Natural killer cell (primary cell): ENCODE measurements at regions of chr11 and their contacts with region 1.

Region 1: GRCh38 chr11:5808500-5809121 is at the start of gene OR52N2:
- DNase-seq: peak; percentile 63 to 87
- ATAC-seq: peak; percentile 87 to 95 (median 87)
- H3K4me3 ChIP-seq: peak within 1 kb of the TSS; percentile 48
- H3K4me3 Mint-ChIP-seq: peak within 1 kb of the TSS; percentile 83
- H3K27ac ChIP-seq: no peak within 1 kb of the TSS
- H3K27ac Mint-ChIP-seq: peak within 1 kb of the TSS in 1 of 2 donors; percentile 19
- H3K4me1 ChIP-seq: peaks cover 9% of the 10 kb centered on the region
- H3K4me1 Mint-ChIP-seq: peaks cover 12% of the 10 kb centered on the region in 2 donors
- H3K27me3 ChIP-seq: peaks cover 6% of the 10 kb centered on the region
- H3K27me3 Mint-ChIP-seq: peaks cover 26 to 34% of the 10 kb centered on the region in 2 donors
- CTCF ChIP-seq: peak; percentile 85
- total RNA-seq, gene OR52N2: not detected

Region 2: DNA sequence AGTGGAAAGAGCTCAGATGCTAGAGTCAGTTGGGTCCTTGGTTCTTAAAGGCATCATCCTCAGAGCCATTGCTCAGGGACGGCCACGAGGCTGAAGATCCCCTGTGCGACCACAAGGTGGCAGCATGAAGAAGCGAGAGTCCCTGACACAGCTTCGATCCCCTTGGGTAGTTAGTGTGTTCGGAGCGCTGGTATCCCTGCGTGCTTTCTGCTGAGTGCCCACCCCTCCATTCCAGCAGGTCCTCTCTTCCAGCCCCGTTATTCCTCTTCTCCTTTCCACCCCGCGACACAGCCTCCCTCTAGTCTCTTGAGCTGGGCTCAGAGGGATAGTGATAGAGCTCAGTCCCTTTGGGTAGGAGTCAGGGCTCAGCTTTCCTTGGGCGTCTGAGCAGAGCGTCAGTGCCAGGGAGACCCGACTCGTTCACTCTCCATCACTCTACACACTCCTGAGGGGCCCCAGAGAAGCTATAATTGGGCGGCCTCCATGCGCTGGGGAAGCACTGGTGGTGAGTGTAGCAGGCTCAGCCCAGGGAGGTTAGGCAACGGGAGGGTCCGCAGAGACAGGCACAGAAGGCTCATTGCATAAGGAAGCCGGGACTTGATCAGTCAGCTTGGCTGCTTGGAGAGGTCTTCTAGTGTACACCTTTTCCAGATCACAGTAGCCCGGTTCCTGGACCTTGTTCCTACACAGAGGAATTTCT is 1171.5 kb before region 1 on chr11 and contains the start of gene OR51D1:
- intact Hi-C with region 1: loop called (anchors 2 kb)
- DNase-seq: peak; percentile 57 to 82
- ATAC-seq: peak; percentile 85 to 99 (median 97)
- H3K4me3 ChIP-seq: no peak within 1 kb of the TSS
- H3K4me3 Mint-ChIP-seq: no peak within 1 kb of the TSS
- H3K27ac ChIP-seq: no peak within 1 kb of the TSS
- H3K27ac Mint-ChIP-seq: no peak within 1 kb of the TSS
- H3K4me1 ChIP-seq: peaks cover 6% of the 10 kb centered on the region
- H3K4me1 Mint-ChIP-seq: no peaks in the 10 kb centered on the region
- H3K27me3 ChIP-seq: no peaks in the 10 kb centered on the region
- H3K27me3 Mint-ChIP-seq: peaks cover 0 to 4% of the 10 kb centered on the region in 2 donors
- CTCF ChIP-seq: peak; percentile 78
- total RNA-seq, gene OR51D1: not detected

Region 3: GRCh38 chr11:5123802-5124521 is 684.6 kb before region 1 on chr11:
- intact Hi-C with region 1: loop called (anchors 1 kb)
- DNase-seq: peak in 1 of 2 donors; percentile 64
- ATAC-seq: peak; percentile 54 to 65 (median 59)
- H3K4me3 ChIP-seq: no peak overlapping the region
- H3K4me3 Mint-ChIP-seq: no peak overlapping the region
- H3K27ac ChIP-seq: no peak overlapping the region
- H3K27ac Mint-ChIP-seq: no peak overlapping the region
- H3K4me1 ChIP-seq: no peaks in the 10 kb centered on the region
- H3K4me1 Mint-ChIP-seq: peaks cover 0 to 5% of the 10 kb centered on the region in 2 donors
- H3K27me3 ChIP-seq: no peaks in the 10 kb centered on the region
- H3K27me3 Mint-ChIP-seq: peaks cover 3 to 18% of the 10 kb centered on the region in 2 donors
- CTCF ChIP-seq: peak; percentile 66

Region 4: DNA sequence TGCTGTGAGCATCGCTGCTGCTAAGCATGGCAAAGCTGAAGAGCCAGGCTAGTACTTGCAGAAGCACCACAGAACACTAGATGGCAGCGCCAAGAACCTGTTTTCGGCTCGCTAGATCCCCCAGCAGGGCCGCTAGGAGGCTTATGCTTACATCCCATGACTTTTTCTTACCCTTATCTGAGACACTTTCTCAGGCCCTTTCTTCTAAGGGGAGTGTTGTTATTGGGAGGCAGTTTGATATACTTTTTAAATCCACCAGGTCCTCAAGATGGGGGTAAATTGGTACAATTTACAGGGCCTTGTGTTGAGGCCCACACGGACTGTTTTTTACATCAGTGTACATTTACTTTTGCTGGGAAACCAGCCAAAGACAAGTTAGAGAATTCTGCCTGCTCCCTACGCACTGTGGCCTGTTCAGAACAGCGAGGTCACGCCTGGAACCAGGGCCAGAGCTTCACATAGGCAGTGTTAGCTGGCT is 208.2 kb before region 1 on chr11:
- intact Hi-C with region 1: loop called (anchors 1 kb)
- DNase-seq: peak; percentile 39 to 78
- ATAC-seq: peak; percentile 82 to 92 (median 92)
- H3K4me3 ChIP-seq: no peak overlapping the region
- H3K4me3 Mint-ChIP-seq: no peak overlapping the region
- H3K27ac ChIP-seq: no peak overlapping the region
- H3K27ac Mint-ChIP-seq: no peak overlapping the region
- H3K4me1 ChIP-seq: peaks cover 11% of the 10 kb centered on the region
- H3K4me1 Mint-ChIP-seq: peaks cover 7 to 12% of the 10 kb centered on the region in 2 donors
- H3K27me3 ChIP-seq: no peaks in the 10 kb centered on the region
- H3K27me3 Mint-ChIP-seq: peaks cover 7 to 13% of the 10 kb centered on the region in 2 donors
- CTCF ChIP-seq: peak; percentile 63

Region 5: GRCh38 chr11:5671841-5672240 is 136.8 kb before region 1 on chr11:
- intact Hi-C with region 1: no loop called
- DNase-seq: no peak
- ATAC-seq: no peak
- H3K4me3 ChIP-seq: no peak overlapping the region
- H3K4me3 Mint-ChIP-seq: no peak overlapping the region
- H3K27ac ChIP-seq: no peak overlapping the region
- H3K27ac Mint-ChIP-seq: no peak overlapping the region
- H3K4me1 ChIP-seq: no peaks in the 10 kb centered on the region
- H3K4me1 Mint-ChIP-seq: peaks cover 0 to 12% of the 10 kb centered on the region in 2 donors
- H3K27me3 ChIP-seq: no peaks in the 10 kb centered on the region
- H3K27me3 Mint-ChIP-seq: no peaks in the 10 kb centered on the region
- CTCF ChIP-seq: no peak